CD8-positive, alpha-beta T cell (primary cell): ENCODE measurements at regions of chr5 and their contacts with region 1.

Region 1: GRCh38 chr5:144191998-144192397 is 21.3 kb downstream of the KCTD16 start:
- DNase-seq: peak in 7 of 9 experiments; percentile 15 to 93 (median 32)
- ATAC-seq: peak; percentile 43
- H3K4me3 ChIP-seq: peak overlapping the region; percentile 7 to 27
- H3K4me3 Mint-ChIP-seq: no peak overlapping the region
- H3K27ac ChIP-seq: peak overlapping the region; percentile 9 to 81
- H3K27ac Mint-ChIP-seq: no peak overlapping the region
- H3K4me1 ChIP-seq: peaks cover 49% of the 10 kb centered on the region
- H3K4me1 Mint-ChIP-seq: peaks cover 43% of the 10 kb centered on the region
- H3K27me3 ChIP-seq: no peaks in the 10 kb centered on the region
- H3K27me3 Mint-ChIP-seq: no peaks in the 10 kb centered on the region
- CTCF ChIP-seq: peak; percentile 68

Region 2: GRCh38 chr5:142769741-142770631 is 1422.0 kb before region 1 on chr5 and contains the start of gene ARHGAP26:
- CTCF ChIA-PET with region 1: no interaction called
- POLR2A ChIA-PET with region 1: no interaction called
- intact Hi-C with region 1: loop called in 1 of 2 experiments (anchors 5 kb)
- DNase-seq: peak; percentile 87 to 97 (median 92)
- ATAC-seq: peak; percentile 85
- H3K4me3 ChIP-seq: peak within 1 kb of the TSS; percentile 96 to 98
- H3K4me3 Mint-ChIP-seq: peak within 1 kb of the TSS; percentile 95
- H3K27ac ChIP-seq: peak within 1 kb of the TSS; percentile 74 to 78
- H3K27ac Mint-ChIP-seq: peak within 1 kb of the TSS; percentile 93
- H3K4me1 ChIP-seq: peaks cover 27% of the 10 kb centered on the region
- H3K4me1 Mint-ChIP-seq: peaks cover 45% of the 10 kb centered on the region
- H3K27me3 ChIP-seq: no peaks in the 10 kb centered on the region
- H3K27me3 Mint-ChIP-seq: no peaks in the 10 kb centered on the region
- CTCF ChIP-seq: no peak
- total RNA-seq, gene ARHGAP26: 46.0 to 46.6 TPM

Region 3: GRCh38 chr5:143030349-143030748 is 1161.6 kb before region 1 on chr5:
- CTCF ChIA-PET with region 1: interaction called, 3 read pairs
- POLR2A ChIA-PET with region 1: no interaction called
- intact Hi-C with region 1: loop called in 1 of 2 experiments (anchors 1 kb)
- DNase-seq: peak in 4 of 9 experiments; percentile 27 to 64 (median 37)
- ATAC-seq: peak; percentile 58
- H3K4me3 ChIP-seq: no peak overlapping the region
- H3K4me3 Mint-ChIP-seq: peak overlapping the region; percentile 27
- H3K27ac ChIP-seq: peak overlapping the region in 1 of 2 experiments; percentile 37
- H3K27ac Mint-ChIP-seq: peak overlapping the region; percentile 49
- H3K4me1 ChIP-seq: peaks cover 26% of the 10 kb centered on the region
- H3K4me1 Mint-ChIP-seq: peaks cover 37% of the 10 kb centered on the region
- H3K27me3 ChIP-seq: no peaks in the 10 kb centered on the region
- H3K27me3 Mint-ChIP-seq: no peaks in the 10 kb centered on the region
- CTCF ChIP-seq: no peak

Region 4: DNA sequence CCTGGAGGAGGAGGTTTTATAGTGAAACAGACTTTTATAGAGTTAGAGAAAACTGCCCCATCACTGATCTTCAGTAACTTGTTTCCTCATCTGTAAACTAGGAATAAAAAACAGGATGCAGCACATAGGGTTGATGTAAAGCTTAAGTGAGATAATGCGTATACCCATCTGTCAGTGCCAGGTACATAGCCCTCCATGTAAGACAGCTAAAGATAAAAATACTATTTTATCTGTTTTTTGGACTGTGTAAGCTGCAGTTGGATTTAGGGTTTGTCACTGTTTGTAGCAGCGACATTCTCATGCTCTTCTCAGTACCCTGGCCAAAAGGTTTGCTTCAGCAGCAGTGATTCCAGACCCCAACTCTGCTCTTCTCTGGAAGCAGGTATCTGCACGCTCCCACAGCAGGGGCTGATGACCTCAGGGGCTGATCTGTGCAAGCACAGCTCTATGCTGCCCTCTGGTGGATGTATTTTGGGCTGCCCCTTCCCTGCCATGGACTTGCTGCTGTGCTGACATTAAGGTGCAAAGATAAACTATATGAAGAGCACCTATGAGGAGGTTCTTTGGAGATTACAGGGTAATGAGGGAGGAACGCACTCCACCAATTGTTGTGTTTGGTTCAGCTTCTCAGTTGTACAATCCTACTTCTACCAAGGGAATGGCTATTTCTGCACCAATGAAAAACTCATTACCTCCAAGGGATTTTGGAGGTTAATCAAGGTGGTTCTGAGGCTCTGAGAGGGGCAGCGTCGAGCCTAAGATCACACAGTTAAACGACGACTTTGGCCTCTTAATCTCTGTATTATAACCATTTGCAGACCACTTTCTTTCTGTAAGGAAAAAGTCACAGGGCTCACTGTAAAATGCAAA is 366.9 kb before region 1 on chr5:
- CTCF ChIA-PET with region 1: interaction called, 15 read pairs
- POLR2A ChIA-PET with region 1: interaction called, 3 read pairs
- intact Hi-C with region 1: loop called (anchors 1 to 2 kb)
- DNase-seq: peak; percentile 64 to 90 (median 85)
- ATAC-seq: peak; percentile 98
- H3K4me3 ChIP-seq: no peak overlapping the region
- H3K4me3 Mint-ChIP-seq: no peak overlapping the region
- H3K27ac ChIP-seq: no peak overlapping the region
- H3K27ac Mint-ChIP-seq: no peak overlapping the region
- H3K4me1 ChIP-seq: no peaks in the 10 kb centered on the region
- H3K4me1 Mint-ChIP-seq: peaks cover 9% of the 10 kb centered on the region
- H3K27me3 ChIP-seq: no peaks in the 10 kb centered on the region
- H3K27me3 Mint-ChIP-seq: peaks cover 2% of the 10 kb centered on the region
- CTCF ChIP-seq: peak; percentile 95

Region 5: DNA sequence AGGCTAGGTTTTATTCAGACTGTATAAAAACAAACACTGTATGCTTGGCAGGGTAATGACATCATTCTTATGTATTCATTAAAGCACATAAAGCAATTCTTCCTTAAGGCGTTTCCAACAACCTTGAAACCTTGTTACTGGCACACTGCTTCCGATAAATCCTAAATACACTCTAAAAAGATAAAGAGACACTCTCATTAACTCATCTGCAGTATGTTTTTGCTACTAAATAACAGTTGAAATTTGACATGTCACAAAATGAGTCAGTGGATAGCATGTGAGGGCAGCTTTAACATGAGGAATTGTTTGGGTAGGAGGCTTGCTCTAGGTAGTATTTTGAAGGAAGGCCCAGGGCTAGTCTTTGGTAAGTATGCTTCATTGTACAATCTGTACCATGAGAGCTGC is 35.2 kb before region 1 on chr5:
- CTCF ChIA-PET with region 1: interaction called, 3 read pairs
- POLR2A ChIA-PET with region 1: no interaction called
- intact Hi-C with region 1: loop called in 1 of 2 experiments (anchors 5 kb)
- DNase-seq: no peak
- ATAC-seq: no peak
- H3K4me3 ChIP-seq: no peak overlapping the region
- H3K4me3 Mint-ChIP-seq: no peak overlapping the region
- H3K27ac ChIP-seq: no peak overlapping the region
- H3K27ac Mint-ChIP-seq: peak overlapping the region; percentile 37
- H3K4me1 ChIP-seq: no peaks in the 10 kb centered on the region
- H3K4me1 Mint-ChIP-seq: peaks cover 2% of the 10 kb centered on the region
- H3K27me3 ChIP-seq: no peaks in the 10 kb centered on the region
- H3K27me3 Mint-ChIP-seq: no peaks in the 10 kb centered on the region
- CTCF ChIP-seq: no peak

Region 6: DNA sequence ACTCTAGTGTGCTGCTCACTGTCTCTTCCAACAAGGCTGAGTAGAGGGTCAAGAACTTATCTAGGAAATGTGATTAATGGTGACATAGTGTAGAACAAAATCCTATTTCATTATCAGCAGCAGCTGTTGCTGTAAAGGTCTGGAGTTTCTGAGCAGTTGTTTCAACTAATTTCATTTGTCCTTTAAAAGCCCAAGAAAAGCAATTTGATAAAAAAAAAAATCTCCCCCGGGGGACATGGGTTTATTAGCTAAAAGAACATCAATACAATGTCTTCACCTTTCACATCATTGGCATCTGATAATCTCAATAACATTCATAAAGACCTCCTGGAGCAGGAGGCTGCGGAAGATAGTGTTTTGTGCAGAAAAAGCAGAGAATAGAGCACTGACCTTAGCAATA is 446.8 kb after region 1 on chr5:
- CTCF ChIA-PET with region 1: no interaction called
- POLR2A ChIA-PET with region 1: no interaction called
- intact Hi-C with region 1: no loop called
- DNase-seq: no peak
- ATAC-seq: no peak
- H3K4me3 ChIP-seq: no peak overlapping the region
- H3K4me3 Mint-ChIP-seq: no peak overlapping the region
- H3K27ac ChIP-seq: no peak overlapping the region
- H3K27ac Mint-ChIP-seq: no peak overlapping the region
- H3K4me1 ChIP-seq: no peaks in the 10 kb centered on the region
- H3K4me1 Mint-ChIP-seq: no peaks in the 10 kb centered on the region
- H3K27me3 ChIP-seq: no peaks in the 10 kb centered on the region
- H3K27me3 Mint-ChIP-seq: no peaks in the 10 kb centered on the region
- CTCF ChIP-seq: no peak